T-cell (primary cell): ENCODE measurements at regions of chr12 and their contacts with region 1.

Region 1: DNA sequence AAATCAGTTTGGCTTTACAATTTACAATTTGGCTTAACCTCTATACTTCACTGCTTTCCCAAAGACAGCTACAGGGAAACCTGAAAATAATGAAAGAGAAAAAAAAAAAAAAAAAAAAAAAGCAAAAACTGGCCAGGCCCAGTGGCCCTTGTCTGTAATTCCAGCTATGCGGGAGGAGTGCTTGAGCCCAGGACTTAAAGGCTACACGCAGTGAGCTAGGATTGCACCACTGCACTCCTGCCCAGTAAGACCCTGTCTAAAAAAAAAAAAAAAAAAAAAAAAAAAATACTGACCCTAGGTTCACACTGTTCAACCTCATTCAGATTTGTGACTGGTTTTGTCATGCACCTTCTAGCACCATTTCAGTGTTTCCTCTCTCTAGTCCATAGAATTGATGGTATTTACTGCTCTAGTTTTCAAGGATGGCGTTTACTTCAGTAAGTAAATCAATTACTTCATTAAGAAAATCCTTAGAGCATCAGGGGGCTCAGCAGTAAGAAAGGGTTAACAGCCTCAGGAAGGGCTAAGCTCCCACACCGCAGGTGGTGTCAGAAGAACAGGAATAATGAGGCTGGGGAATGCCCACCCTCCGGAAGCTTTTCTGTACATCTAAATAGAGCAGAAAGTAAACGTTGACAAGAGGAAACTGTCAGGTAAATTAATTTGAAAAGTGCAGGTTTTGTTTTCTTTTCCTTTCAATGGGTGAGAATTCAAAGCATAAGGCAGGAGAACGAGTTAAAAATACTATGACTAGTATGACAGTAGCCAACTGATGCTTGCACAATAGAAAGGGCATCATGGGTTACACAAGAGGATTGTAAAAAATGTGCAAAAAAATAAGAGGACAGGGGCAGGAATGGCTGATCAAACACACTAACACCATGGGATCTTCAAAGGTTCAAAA is 115.0 kb upstream of the MDM1 start:
- DNase-seq: no peak
- ATAC-seq: no peak
- H3K4me3 ChIP-seq: no peak overlapping the region
- H3K4me3 Mint-ChIP-seq: peak overlapping the region in 1 of 3 donors; percentile 54
- H3K27ac ChIP-seq: peak overlapping the region; percentile 54
- H3K27ac Mint-ChIP-seq: peak overlapping the region; percentile 68 to 84
- H3K4me1 ChIP-seq: peaks cover 37 to 38% of the 10 kb centered on the region in 2 experiments
- H3K4me1 Mint-ChIP-seq: peaks cover 59 to 82% (median 75%) of the 10 kb centered on the region in 3 donors
- H3K27me3 ChIP-seq: no peaks in the 10 kb centered on the region
- H3K27me3 Mint-ChIP-seq: no peaks in the 10 kb centered on the region

Region 2: GRCh38 chr12:68358532-68359485 is 88.3 kb before region 1 on chr12:
- CTCF ChIA-PET with region 1: interaction called in 1 of 2 experiments, 17 read pairs
- POLR2A ChIA-PET with region 1: interaction called in 1 of 2 experiments, 7 read pairs
- DNase-seq: peak; percentile 20 to 83 (median 61)
- ATAC-seq: peak; percentile 83 to 93 (median 88)
- H3K4me3 ChIP-seq: no peak overlapping the region
- H3K4me3 Mint-ChIP-seq: no peak overlapping the region
- H3K27ac ChIP-seq: no peak overlapping the region
- H3K27ac Mint-ChIP-seq: peak overlapping the region; percentile 22 to 57
- H3K4me1 ChIP-seq: peaks cover 15% of the 10 kb centered on the region in 2 experiments
- H3K4me1 Mint-ChIP-seq: peaks cover 22 to 36% (median 29%) of the 10 kb centered on the region in 3 donors
- H3K27me3 ChIP-seq: no peaks in the 10 kb centered on the region
- H3K27me3 Mint-ChIP-seq: no peaks in the 10 kb centered on the region

Region 3: GRCh38 chr12:68364893-68365725 is 82.0 kb before region 1 on chr12:
- CTCF ChIA-PET with region 1: no interaction called
- POLR2A ChIA-PET with region 1: interaction called in 1 of 2 experiments, 10 read pairs
- DNase-seq: peak; percentile 63 to 90 (median 80)
- ATAC-seq: peak; percentile 91 to 94 (median 92)
- H3K4me3 ChIP-seq: peak overlapping the region; percentile 39 to 49
- H3K4me3 Mint-ChIP-seq: peak overlapping the region; percentile 67 to 79 (median 78)
- H3K27ac ChIP-seq: peak overlapping the region; percentile 91
- H3K27ac Mint-ChIP-seq: peak overlapping the region; percentile 92 to 97
- H3K4me1 ChIP-seq: peaks cover 47 to 62% of the 10 kb centered on the region in 2 experiments
- H3K4me1 Mint-ChIP-seq: peaks cover 59 to 78% (median 67%) of the 10 kb centered on the region in 3 donors
- H3K27me3 ChIP-seq: no peaks in the 10 kb centered on the region
- H3K27me3 Mint-ChIP-seq: no peaks in the 10 kb centered on the region

Region 4: GRCh38 chr12:68428724-68429501 is 18.2 kb before region 1 on chr12:
- CTCF ChIA-PET with region 1: no interaction called
- POLR2A ChIA-PET with region 1: no interaction called
- DNase-seq: no peak
- ATAC-seq: no peak
- H3K4me3 ChIP-seq: no peak overlapping the region
- H3K4me3 Mint-ChIP-seq: no peak overlapping the region
- H3K27ac ChIP-seq: no peak overlapping the region
- H3K27ac Mint-ChIP-seq: no peak overlapping the region
- H3K4me1 ChIP-seq: no peaks in the 10 kb centered on the region
- H3K4me1 Mint-ChIP-seq: peaks cover 0 to 4% (median 0%) of the 10 kb centered on the region in 3 donors
- H3K27me3 ChIP-seq: no peaks in the 10 kb centered on the region
- H3K27me3 Mint-ChIP-seq: no peaks in the 10 kb centered on the region

Region 5: DNA sequence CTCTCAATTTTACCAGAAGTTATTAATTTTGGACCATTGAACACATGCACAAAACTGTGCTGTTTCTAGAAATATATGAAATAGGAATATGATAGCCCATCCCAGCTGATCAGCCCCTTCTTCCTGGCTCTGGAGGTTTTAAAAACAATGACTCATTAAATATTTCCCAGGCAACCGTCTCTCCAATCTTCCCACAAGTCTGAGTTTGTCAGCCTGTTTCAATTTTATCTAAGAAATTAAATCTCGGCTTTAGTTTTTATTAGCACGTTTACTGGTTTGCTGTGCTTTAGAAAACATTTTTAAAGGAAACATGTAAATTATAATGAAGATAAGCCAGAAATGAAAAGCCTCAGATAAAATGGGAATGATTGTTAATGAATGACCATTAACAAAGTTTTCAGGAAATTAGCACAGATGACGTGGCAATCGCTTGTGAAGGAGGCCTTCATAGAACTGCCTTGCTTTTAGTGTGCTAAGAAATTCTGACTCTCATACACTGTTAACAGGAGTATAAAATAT is 74.2 kb after region 1 on chr12:
- CTCF ChIA-PET with region 1: no interaction called
- POLR2A ChIA-PET with region 1: no interaction called
- DNase-seq: no peak
- ATAC-seq: no peak
- H3K4me3 ChIP-seq: no peak overlapping the region
- H3K4me3 Mint-ChIP-seq: no peak overlapping the region
- H3K27ac ChIP-seq: no peak overlapping the region
- H3K27ac Mint-ChIP-seq: no peak overlapping the region
- H3K4me1 ChIP-seq: no peaks in the 10 kb centered on the region
- H3K4me1 Mint-ChIP-seq: peaks cover 0 to 5% (median 0%) of the 10 kb centered on the region in 3 donors
- H3K27me3 ChIP-seq: no peaks in the 10 kb centered on the region
- H3K27me3 Mint-ChIP-seq: no peaks in the 10 kb centered on the region